ENCODE measurements at regions of chr10 and their contacts with region 1.

Region 1: GRCh38 chr10:133309111-133309719 is 501 bp downstream of the ZNF511 start:
- DNase-seq: peak; percentile 96
- H3K4me3 Mint-ChIP-seq: peak overlapping the region; percentile 67
- H3K27ac Mint-ChIP-seq: peak overlapping the region; percentile 82
- H3K4me1 Mint-ChIP-seq: peaks cover 25% of the 10 kb centered on the region
- H3K27me3 Mint-ChIP-seq: no peaks in the 10 kb centered on the region

Region 2: GRCh38 chr10:132142411-132143161 is 1166.6 kb before region 1 on chr10:
- CTCF ChIA-PET with region 1: no interaction called
- POLR2A ChIA-PET with region 1: no interaction called
- intact Hi-C with region 1: no loop called
- DNase-seq: peak; percentile 59
- H3K4me3 Mint-ChIP-seq: no peak overlapping the region
- H3K27ac Mint-ChIP-seq: no peak overlapping the region
- H3K4me1 Mint-ChIP-seq: no peaks in the 10 kb centered on the region
- H3K27me3 Mint-ChIP-seq: no peaks in the 10 kb centered on the region

Region 3: GRCh38 chr10:132331526-132332432 is 977.4 kb before region 1 on chr10 and contains the start of gene LRRC27:
- CTCF ChIA-PET with region 1: no interaction called
- POLR2A ChIA-PET with region 1: no interaction called
- intact Hi-C with region 1: loop called (anchors 2 kb)
- DNase-seq: peak; percentile 99
- H3K4me3 Mint-ChIP-seq: peak within 1 kb of the TSS; percentile 90
- H3K27ac Mint-ChIP-seq: peak within 1 kb of the TSS; percentile 91
- H3K4me1 Mint-ChIP-seq: peaks cover 48% of the 10 kb centered on the region
- H3K27me3 Mint-ChIP-seq: peaks cover 1% of the 10 kb centered on the region
- total RNA-seq, gene LRRC27: 2.5 to 2.8 TPM

Region 4: DNA sequence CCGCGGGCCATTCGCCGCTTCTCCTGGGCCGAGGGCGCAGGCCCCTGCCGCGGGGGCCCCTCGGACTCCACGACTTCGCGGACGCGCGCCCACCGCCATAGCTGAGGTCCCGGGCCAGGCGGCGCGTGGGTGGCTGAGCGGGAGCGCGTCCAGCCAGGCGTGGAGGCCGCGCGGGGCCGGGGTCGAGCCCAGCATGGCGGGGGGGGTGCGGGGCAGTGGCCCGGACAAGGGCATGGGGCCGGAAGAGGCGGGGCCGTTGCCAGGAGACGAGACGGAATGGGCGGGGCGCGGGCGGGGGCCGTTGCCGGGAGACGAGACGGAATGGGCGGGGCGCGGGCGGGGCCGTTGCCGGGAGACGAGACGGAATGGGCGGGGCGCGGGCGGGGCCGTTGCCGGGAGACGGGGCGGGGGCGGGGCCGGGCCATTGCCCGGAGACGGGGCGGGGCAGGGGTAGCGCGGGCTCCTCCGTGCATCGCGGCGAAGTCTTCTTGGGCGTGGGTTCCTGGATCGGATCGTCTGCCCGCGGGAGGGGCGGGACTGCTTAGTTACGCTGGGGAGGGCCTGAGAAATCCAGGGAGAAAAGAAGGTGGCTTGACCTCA is 47.4 kb before region 1 on chr10:
- CTCF ChIA-PET with region 1: interaction called, 18 read pairs
- POLR2A ChIA-PET with region 1: interaction called, 6 read pairs
- intact Hi-C with region 1: loop called (anchors 1 kb)
- DNase-seq: peak; percentile 92
- H3K4me3 Mint-ChIP-seq: peak overlapping the region; percentile 79
- H3K27ac Mint-ChIP-seq: peak overlapping the region; percentile 90
- H3K4me1 Mint-ChIP-seq: peaks cover 76% of the 10 kb centered on the region
- H3K27me3 Mint-ChIP-seq: peaks cover 2% of the 10 kb centered on the region

Region 5: DNA sequence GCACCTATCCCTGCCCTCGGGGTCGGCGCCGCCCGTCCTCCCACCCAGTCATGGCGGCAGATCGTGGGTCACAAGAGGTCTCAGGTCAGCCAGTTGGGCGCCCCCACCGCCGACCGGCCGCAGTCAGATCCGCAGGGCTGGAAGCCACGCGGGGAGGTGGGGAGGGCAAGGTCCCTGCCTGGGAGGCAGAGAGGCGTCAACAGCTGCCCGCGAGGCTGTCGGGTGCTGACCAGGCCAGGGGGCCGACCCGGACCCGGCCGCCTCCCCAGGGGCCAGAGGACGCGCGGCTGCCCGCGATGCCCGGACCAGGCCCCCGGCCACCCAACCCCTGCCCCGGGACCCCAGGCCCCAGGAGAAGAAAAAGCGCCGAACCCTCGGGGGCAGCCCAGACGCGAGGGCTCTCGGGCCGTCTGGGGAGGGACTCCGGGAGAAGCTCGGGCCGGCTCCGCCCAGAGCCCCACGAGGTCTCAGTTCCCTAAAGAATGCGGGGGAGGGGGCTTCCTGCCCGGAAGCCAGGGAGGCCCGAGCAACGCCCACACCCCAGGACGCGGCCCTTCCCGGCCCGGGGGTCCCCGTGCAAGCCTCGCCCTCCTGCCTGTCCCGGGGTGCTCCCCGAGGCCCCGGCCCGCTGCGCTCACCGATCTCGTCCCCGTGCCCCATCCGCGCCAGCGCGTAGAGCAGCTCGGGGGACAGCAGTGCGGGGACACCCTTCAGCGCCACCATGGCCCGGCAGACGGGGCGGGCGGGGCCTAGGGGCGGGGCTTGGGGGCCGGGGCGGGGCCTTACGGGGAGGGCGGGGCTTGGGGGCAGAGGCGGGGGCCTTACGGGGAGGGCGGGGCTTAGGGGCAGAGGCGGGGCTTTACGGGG is 48.3 kb after region 1 on chr10 and contains the start of gene FUOM:
- CTCF ChIA-PET with region 1: no interaction called
- POLR2A ChIA-PET with region 1: no interaction called
- intact Hi-C with region 1: loop called (anchors 5 kb)
- DNase-seq: peak; percentile 82
- H3K4me3 Mint-ChIP-seq: peak within 1 kb of the TSS; percentile 78
- H3K27ac Mint-ChIP-seq: peak within 1 kb of the TSS; percentile 69
- H3K4me1 Mint-ChIP-seq: peaks cover 3% of the 10 kb centered on the region
- H3K27me3 Mint-ChIP-seq: no peaks in the 10 kb centered on the region
- total RNA-seq, gene FUOM: 46.5 to 49.8 TPM

Region 6: DNA sequence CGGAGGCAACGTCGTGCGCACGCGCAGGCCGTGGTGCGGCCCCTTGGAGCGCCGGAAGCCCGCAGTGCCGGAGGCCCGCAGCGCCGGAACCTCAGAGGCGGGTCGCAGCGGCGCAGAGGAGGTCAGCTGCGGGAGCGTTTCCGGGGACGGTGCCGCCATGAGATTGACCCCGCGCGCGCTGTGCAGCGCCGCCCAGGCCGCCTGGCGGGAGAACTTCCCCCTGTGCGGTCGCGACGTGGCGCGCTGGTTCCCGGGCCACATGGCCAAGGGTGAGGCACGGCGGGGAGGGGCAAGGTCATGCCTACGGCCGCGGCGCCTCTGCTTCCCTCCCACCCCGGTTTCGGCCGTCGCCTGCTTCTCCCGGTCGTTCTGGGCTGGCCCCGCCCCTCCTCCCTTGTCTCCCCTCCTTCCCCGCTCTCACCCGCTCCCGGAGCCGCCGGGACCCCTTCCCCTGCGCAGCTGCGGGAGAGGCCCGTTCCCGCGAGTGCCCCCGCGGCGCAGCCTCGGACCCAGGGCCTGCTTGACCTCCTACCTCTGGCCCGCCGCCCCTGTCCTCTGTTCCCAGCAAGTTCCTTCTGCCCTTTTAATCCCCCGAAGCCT is 84.9 kb after region 1 on chr10 and contains the start of gene MTG1:
- CTCF ChIA-PET with region 1: interaction called, 4 read pairs
- POLR2A ChIA-PET with region 1: no interaction called
- intact Hi-C with region 1: loop called (anchors 2 kb)
- DNase-seq: peak; percentile 96
- H3K4me3 Mint-ChIP-seq: peak within 1 kb of the TSS; percentile 96
- H3K27ac Mint-ChIP-seq: peak within 1 kb of the TSS; percentile 95
- H3K4me1 Mint-ChIP-seq: peaks cover 49% of the 10 kb centered on the region
- H3K27me3 Mint-ChIP-seq: no peaks in the 10 kb centered on the region
- total RNA-seq, gene MTG1: 33.9 to 40.3 TPM

Measured in activated CD4-positive, alpha-beta memory T cell treated with anti-CD3 and anti-CD28 coated beads for 36 hours (primary cell).